Posterior cingulate gyrus (tissue), 11 donors: ENCODE measurements at regions of chr1 and their contacts with region 1.

Region 1: GRCh38 chr1:11458811-11459275 is 20.1 kb upstream of the DISP3 start:
- DNase-seq: peak; percentile 71 to 97 (median 78)

Region 2: DNA sequence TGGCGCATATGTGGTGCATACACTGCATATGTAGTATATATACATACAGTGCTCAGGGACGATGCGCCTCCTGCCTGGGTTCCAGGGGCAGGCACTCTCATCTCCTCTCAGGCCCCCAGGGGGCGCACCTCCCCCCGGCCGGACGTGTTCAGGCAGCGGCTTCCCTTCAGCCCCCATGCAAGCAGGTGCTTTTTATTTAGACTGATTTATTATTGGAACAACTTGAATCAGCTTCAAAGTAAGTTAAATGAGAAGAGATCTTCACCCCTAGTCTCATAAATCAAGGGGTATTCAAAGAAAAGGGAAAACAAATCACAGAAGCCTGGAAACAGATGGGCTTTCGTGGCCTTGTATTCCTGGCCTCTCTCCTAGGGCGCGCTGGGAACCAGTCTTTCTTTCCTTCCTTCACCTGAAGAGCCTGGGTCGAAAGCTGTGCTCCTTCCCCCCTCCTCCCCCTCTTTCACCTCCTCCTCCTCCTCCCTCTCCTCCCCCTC is 121.2 kb before region 1 on chr1:
- intact Hi-C with region 1: loop called (anchors 10 kb)
- DNase-seq: peak in 6 of 10 donors; percentile 35 to 90 (median 52)